ENCODE measurements at regions of chr18 and their contacts with region 1.

Region 1: DNA sequence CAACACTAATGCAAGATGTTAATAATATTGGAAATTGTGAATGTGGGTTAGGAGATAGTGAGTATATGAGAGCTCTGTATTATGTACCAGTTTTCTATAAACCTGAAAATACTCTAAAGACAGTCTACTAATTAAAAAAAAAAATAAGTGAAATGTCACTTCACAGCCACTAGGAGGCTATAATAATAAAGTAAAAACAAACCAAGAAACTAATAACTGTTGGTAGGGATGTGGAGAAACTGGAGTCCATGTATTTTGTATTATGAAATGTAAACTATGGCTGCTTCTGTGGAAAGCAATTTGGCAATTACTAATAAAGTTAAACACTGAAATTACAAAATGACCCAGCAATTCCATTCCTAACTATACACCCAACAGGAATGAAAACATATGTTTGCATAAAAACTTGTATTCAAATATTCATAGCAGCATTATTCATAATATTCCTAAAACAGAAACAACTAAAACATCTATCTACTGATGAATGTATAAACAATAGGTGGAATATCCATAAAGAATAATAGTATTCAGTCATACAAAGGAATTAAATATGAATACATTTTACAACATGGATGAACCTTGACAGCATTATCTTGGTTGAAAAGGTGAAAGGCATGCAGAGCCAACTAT is 36.2 kb downstream of the CCDC178 start:
- DNase-seq: no peak

Region 2: DNA sequence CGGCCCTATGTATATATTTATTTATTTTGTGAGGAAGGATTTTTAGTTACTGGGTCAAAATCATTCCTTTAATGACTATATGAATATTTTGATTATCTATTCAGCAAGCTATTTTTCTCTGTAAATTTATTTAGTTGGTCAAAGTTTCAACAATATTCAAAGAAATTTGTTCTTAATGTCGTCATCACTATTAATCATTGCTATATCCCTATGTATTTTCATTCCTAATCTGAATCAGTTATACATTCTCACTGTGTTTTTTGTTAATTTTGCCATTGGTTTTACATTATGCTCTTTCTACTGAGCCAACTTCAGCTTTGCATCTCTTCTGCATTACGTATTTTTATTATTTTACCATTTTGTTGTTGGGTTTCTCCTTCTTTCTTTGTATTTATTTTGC is 69.6 kb before region 1 on chr18:
- intact Hi-C with region 1: no loop called
- DNase-seq: no peak

Region 3: GRCh38 chr18:33459612-33460011 is 55.3 kb after region 1 on chr18:
- intact Hi-C with region 1: loop called in 1 of 2 experiments (anchors 10 kb)
- DNase-seq: no peak

Region 4: DNA sequence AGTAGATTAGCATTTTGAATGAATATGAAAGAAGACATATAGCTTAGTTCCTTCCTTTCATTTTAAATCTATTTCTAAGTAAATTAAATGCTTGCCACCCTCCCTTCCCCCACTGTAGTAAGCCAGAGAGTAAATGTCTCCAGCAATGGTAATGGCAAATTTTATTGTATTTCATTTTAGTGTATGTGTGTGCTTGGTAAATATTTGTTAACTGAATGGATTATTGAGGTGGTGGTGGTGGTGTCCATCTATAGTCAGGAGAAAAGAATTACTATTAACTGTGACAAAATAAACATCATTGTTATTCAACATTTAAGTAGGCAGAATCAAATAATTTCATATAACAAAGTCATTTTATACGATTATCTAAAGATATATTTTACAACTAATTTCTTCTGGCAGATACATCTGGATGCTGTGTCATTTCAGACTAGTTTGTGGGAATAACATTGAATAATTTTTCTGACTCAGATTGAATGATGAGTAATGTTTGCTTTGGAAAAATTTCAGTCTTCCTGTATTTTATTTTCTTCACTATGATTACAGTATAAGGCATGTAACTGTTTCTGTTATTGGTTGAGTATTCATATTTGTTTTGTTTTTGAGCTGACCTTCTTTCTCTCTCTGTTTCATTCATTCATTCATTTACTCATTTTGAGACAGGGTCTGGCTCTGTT is 192.0 kb after region 1 on chr18:
- intact Hi-C with region 1: no loop called
- DNase-seq: no peak